Psoas muscle (tissue), 8 donors: ENCODE measurements at regions of chr11 and their contacts with region 1.

Region 1: GRCh38 chr11:9428706-9429105 is 32.1 kb upstream of the ZNF143 start:
- DNase-seq: no peak
- ATAC-seq: no peak
- H3K4me3 ChIP-seq: no peak overlapping the region
- H3K27ac ChIP-seq: no peak overlapping the region
- H3K4me1 ChIP-seq: no peaks in the 10 kb centered on the region
- H3K27me3 ChIP-seq: no peaks in the 10 kb centered on the region
- CTCF ChIP-seq: no peak

Region 2: GRCh38 chr11:9363954-9364912 is 64.5 kb before region 1 on chr11:
- intact Hi-C with region 1: no loop called
- DNase-seq: peak; percentile 97 to 98
- ATAC-seq: peak; percentile 99 to 100 (median 99)
- H3K4me3 ChIP-seq: peak overlapping the region; percentile 67
- H3K27ac ChIP-seq: peak overlapping the region; percentile 100
- H3K4me1 ChIP-seq: peaks cover 3% of the 10 kb centered on the region
- H3K27me3 ChIP-seq: no peaks in the 10 kb centered on the region
- CTCF ChIP-seq: no peak

Region 3: GRCh38 chr11:9489080-9489765 is 60.5 kb after region 1 on chr11:
- intact Hi-C with region 1: loop called in 1 of 2 experiments (anchors 5 kb)
- DNase-seq: no peak
- ATAC-seq: no peak
- H3K4me3 ChIP-seq: peak overlapping the region; percentile 9
- H3K27ac ChIP-seq: no peak overlapping the region
- H3K4me1 ChIP-seq: peaks cover 15% of the 10 kb centered on the region
- H3K27me3 ChIP-seq: no peaks in the 10 kb centered on the region
- CTCF ChIP-seq: no peak